A549 (cell line): ENCODE measurements at regions of chr9 and their contacts with region 1.

Region 1: DNA sequence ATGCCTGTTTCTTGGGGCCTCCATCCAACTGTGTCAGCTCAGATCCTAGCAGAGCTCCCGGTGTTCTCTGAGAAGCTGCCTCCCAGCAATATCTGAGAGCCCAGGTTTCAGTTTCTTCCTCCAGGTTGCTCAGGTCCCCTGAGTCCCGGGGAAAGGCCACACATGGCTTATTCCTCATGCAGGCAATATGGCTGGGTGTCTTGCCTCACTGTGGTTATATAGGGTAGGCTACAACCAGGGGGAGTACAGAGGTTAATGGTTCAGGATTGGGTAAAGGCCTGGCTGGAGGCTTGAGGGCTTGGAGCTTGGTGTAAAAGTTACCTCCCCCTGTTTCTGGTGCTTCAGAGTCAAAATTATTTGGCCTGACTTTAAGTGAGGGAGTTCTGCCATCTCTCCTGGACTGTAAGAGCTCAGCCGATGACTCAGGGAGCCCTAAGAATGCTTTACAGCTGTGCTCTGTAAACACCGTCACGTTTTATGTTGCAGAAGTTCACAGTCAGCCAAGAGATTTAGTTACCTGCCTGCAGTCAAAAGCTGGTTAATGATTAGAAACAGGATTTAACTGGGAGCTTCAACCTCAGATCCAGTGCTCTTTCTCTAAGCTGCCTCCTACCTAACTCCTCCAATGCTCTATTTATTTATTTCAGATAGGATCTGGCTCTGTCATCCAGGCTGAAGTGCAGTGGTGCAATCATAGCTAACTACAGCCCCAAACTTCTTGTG is 24.3 kb upstream of the UBAP2 start:
- DNase-seq: peak; percentile 87
- ATAC-seq: peak; percentile 85 to 93
- H3K4me3 ChIP-seq: no peak overlapping the region
- H3K27ac ChIP-seq: peak overlapping the region; percentile 61 to 78
- H3K4me1 ChIP-seq: peaks cover 22% of the 10 kb centered on the region
- CTCF ChIP-seq: no peak
- EP300 ChIP-seq: no peak; a peak in 1 of 5 replicates
- POLR2A ChIP-seq: no peak
- RAD21 ChIP-seq: no peak; a peak in 1 of 5 replicates

Region 2: DNA sequence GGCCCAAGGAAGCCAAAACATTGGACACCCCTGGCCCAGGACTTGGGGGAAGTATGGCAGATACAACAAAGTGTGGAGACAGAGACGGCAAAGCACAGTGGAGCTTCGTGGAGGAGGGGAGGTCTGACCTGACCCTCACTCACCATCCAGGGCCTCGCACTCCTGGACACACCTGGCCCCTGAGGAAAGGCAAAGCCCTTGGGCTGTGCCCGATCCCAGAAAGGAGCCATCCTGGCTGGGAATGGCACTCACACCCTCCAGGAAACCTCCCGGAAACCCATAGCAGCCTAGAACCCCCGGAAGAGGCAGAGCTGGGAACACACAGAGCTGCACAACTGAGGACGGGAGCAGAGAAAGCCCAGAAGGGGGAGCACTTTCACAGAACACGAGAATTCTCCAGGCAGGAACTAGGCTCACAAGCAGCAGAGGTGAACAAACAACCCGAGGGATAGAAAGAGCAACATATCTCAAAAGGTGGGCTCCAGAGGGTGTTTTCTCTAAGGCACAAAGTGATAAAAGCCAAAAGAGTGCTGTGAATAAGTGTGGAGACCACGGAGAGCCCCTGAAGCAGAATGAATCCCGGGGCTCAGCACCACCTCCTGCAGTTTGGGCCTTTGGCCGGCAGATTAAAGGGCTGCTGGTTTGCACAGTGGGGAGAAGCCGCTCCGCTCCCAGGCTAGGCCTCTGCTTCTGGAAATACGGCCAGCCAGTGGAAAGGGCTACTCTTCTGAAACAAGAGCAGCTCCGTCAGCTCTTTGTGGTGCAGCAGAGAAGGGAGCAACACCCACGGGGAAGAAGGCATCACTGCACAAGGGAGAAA is 147.8 kb before region 1 on chr9:
- CTCF ChIA-PET with region 1: interaction called, 32 read pairs
- POLR2A ChIA-PET with region 1: no interaction called
- DNase-seq: peak; percentile 63 to 71
- ATAC-seq: peak; percentile 68 to 80
- H3K4me3 ChIP-seq: no peak overlapping the region
- H3K27ac ChIP-seq: peak overlapping the region in 1 of 2 experiments; percentile 9; a peak in 2 of 6 replicates
- H3K4me1 ChIP-seq: peaks cover 5% of the 10 kb centered on the region; the same call in 1 of the 3 replicates
- CTCF ChIP-seq: peak; percentile 76
- EP300 ChIP-seq: no peak
- POLR2A ChIP-seq: no peak
- RAD21 ChIP-seq: peak; percentile 68 to 80

Region 3: GRCh38 chr9:34010979-34011378 is 62.0 kb before region 1 on chr9:
- CTCF ChIA-PET with region 1: interaction called, 22 read pairs
- POLR2A ChIA-PET with region 1: interaction called, 3 read pairs
- DNase-seq: peak; percentile 23 to 27
- ATAC-seq: peak in 1 of 2 experiments; percentile 67; a peak in 3 of 6 replicates
- H3K4me3 ChIP-seq: no peak overlapping the region
- H3K27ac ChIP-seq: no peak overlapping the region
- H3K4me1 ChIP-seq: peaks cover 6% of the 10 kb centered on the region; the same call in 1 of the 3 replicates
- CTCF ChIP-seq: peak; percentile 52
- EP300 ChIP-seq: no peak
- POLR2A ChIP-seq: no peak
- RAD21 ChIP-seq: peak; percentile 46 to 65; a peak in 4 of 5 replicates

Region 4: GRCh38 chr9:34048923-34049697 is 23.9 kb before region 1 on chr9:
- CTCF ChIA-PET with region 1: interaction called, 20 read pairs
- POLR2A ChIA-PET with region 1: interaction called, 37 read pairs
- DNase-seq: peak; percentile 96 to 99
- ATAC-seq: peak; percentile 93 to 94
- H3K4me3 ChIP-seq: peak overlapping the region; percentile 76
- H3K27ac ChIP-seq: peak overlapping the region; percentile 97 to 98
- H3K4me1 ChIP-seq: peaks cover 29% of the 10 kb centered on the region
- CTCF ChIP-seq: no peak
- EP300 ChIP-seq: no peak
- POLR2A ChIP-seq: peak; percentile 18; the same call in 1 of the 2 replicates
- RAD21 ChIP-seq: no peak

Region 5: DNA sequence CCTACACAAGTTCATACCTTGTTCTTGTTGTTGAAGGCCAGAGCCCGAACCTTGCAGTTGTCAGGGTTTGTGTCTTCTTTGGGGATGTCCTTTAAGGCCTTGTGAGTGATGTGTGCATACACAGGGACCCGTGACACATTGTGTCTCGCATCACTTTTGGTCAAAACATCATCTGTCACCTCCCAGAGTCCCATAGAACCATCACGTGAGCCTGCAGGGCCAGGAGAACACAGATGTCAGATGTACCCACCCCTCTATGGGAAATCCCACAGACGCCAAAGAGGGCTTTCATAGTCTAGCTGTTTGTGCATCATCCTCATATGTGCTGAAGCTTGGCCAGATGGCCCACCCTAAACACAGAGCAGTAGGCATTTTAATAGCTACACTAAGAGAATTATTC is 25.3 kb after region 1 on chr9:
- CTCF ChIA-PET with region 1: interaction called, 11 read pairs
- POLR2A ChIA-PET with region 1: no interaction called
- DNase-seq: no peak
- ATAC-seq: no peak
- H3K4me3 ChIP-seq: no peak overlapping the region
- H3K27ac ChIP-seq: no peak overlapping the region
- H3K4me1 ChIP-seq: no peaks in the 10 kb centered on the region
- CTCF ChIP-seq: no peak
- EP300 ChIP-seq: no peak
- POLR2A ChIP-seq: no peak
- RAD21 ChIP-seq: no peak